BJ (cell line): ENCODE measurements at regions of chr2 and their contacts with region 1.

Region 1: GRCh38 chr2:88669371-88670214 is 21.9 kb upstream of the RPIA start:
- DNase-seq: no peak
- H3K4me3 ChIP-seq: no peak overlapping the region
- H3K27me3 ChIP-seq: peaks cover 3% of the 10 kb centered on the region; the same call in 1 of the 2 replicates
- CTCF ChIP-seq: peak; percentile 64

Region 2: DNA sequence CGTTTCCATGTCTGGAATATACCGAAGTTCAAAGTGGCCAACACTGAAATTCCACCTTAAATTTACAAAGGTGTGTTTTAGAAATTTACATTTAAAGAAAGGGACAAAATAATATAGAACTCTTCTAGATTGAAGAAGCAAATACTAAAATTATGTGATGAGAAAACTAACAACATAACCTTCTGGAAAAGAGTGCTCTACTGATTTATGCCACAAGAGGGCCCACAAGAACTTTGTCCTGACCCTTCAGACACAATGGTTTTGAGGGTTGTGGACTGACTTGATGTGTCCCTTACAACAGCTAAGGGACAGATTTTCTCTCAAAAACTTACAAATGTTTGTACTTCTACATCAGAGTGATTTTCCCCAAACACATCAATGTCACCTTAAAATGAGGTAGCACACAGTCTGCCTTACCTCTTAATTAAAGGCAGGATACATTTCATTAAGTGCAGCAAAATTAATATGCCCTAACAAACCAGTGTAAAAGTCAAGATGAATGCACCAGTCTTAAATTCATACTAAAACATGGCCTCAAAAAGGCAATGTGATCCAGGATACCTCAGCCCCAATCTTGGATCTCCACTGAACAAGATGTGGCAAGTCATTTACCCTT is 78.5 kb before region 1 on chr2:
- CTCF ChIA-PET with region 1: interaction called, 328 read pairs
- POLR2A ChIA-PET with region 1: no interaction called
- DNase-seq: no peak
- H3K4me3 ChIP-seq: no peak overlapping the region
- H3K27me3 ChIP-seq: no peaks in the 10 kb centered on the region
- CTCF ChIP-seq: peak; percentile 74

Region 3: GRCh38 chr2:88627056-88627855 is 42.3 kb before region 1 on chr2 and contains the start of gene EIF2AK3:
- CTCF ChIA-PET with region 1: interaction called, 13 read pairs
- POLR2A ChIA-PET with region 1: no interaction called
- DNase-seq: peak; percentile 100
- H3K4me3 ChIP-seq: peak within 1 kb of the TSS; percentile 97
- H3K27me3 ChIP-seq: no peaks in the 10 kb centered on the region
- CTCF ChIP-seq: no peak
- polyA plus RNA-seq, gene EIF2AK3: 3.8 and 8.9 TPM in 2 replicates

Region 4: GRCh38 chr2:88659538-88659916 is 10.1 kb before region 1 on chr2:
- CTCF ChIA-PET with region 1: interaction called, 66 read pairs
- POLR2A ChIA-PET with region 1: no interaction called
- DNase-seq: peak; percentile 73
- H3K4me3 ChIP-seq: no peak overlapping the region
- H3K27me3 ChIP-seq: no peaks in the 10 kb centered on the region
- CTCF ChIP-seq: no peak

Region 5: GRCh38 chr2:88680266-88680902 is 10.8 kb after region 1 on chr2:
- CTCF ChIA-PET with region 1: interaction called, 12 read pairs
- POLR2A ChIA-PET with region 1: no interaction called
- DNase-seq: no peak
- H3K4me3 ChIP-seq: no peak overlapping the region
- H3K27me3 ChIP-seq: no peaks in the 10 kb centered on the region
- CTCF ChIP-seq: no peak

Region 6: DNA sequence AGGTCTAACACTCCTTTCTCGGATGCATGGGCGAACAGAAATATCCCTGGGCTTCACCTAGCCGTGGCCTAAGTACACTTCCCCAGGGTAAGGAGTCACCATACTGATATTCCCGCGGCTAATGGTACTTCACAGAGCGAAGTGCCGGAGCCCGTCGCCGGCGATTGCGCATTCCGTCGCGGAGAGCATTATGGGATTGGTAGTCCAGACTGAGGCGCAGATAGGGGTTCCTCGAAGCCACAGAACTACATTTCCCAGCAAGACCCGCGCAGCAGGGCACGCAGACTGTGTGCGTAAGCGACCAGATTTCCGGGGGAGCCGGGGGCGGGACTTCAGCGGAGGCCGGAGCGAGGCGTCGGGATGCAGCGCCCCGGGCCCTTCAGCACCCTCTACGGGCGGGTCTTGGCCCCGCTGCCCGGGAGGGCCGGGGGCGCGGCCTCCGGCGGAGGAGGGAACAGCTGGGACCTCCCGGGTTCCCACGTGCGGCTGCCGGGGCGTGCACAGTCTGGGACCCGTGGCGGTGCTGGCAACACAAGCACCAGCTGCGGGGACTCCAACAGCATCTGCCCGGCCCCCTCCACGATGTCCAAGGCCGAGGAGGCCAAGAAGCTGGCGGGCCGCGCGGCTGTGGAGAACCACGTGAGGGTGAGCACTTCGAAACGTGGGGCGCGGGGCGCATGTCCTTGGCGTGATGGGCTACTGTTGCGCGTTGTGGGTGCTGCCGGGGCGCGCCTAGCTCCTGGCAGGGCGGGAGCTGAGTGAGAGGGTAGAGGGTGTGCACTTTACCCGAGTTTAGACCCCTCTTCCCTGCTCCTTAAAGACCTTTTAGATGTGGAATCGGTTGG is 22.0 kb after region 1 on chr2 and contains the start of gene RPIA:
- CTCF ChIA-PET with region 1: interaction called, 16 read pairs
- POLR2A ChIA-PET with region 1: no interaction called
- DNase-seq: peak; percentile 92
- H3K4me3 ChIP-seq: peak within 1 kb of the TSS; percentile 97
- H3K27me3 ChIP-seq: no peaks in the 10 kb centered on the region
- CTCF ChIP-seq: peak; percentile 56
- polyA plus RNA-seq, gene RPIA: 6.4 and 8.0 TPM in 2 replicates